Aorta (tissue), 5 donors: ENCODE measurements at regions of chr10 and their contacts with region 1.

Region 1: GRCh38 chr10:5948999-5949759 is 28.2 kb downstream of the IL15RA start:
- DNase-seq: peak; percentile 73 to 81
- ATAC-seq: no peak
- H3K4me3 ChIP-seq: no peak overlapping the region
- H3K27ac ChIP-seq: no peak overlapping the region
- H3K4me1 ChIP-seq: no peaks in the 10 kb centered on the region
- H3K27me3 ChIP-seq: no peaks in the 10 kb centered on the region

Region 2: GRCh38 chr10:5977471-5978229 is 28.5 kb after region 1 on chr10 and contains the start of gene IL15RA:
- intact Hi-C with region 1: loop called in 1 of 2 experiments (anchors 2 kb)
- DNase-seq: peak; percentile 90 to 94
- ATAC-seq: peak; percentile 83
- H3K4me3 ChIP-seq: peak within 1 kb of the TSS; percentile 81 to 84
- H3K27ac ChIP-seq: peak within 1 kb of the TSS; percentile 34 to 40
- H3K4me1 ChIP-seq: no peaks in the 10 kb centered on the region
- H3K27me3 ChIP-seq: no peaks in the 10 kb centered on the region
- total RNA-seq, gene IL15RA: 19.0 to 21.2 TPM

Region 3: GRCh38 chr10:6014241-6014761 is 65.1 kb after region 1 on chr10:
- intact Hi-C with region 1: loop called in 1 of 2 experiments (anchors 10 kb)
- DNase-seq: peak in 1 of 2 donors; percentile 58
- ATAC-seq: peak; percentile 67
- H3K4me3 ChIP-seq: no peak overlapping the region
- H3K27ac ChIP-seq: no peak overlapping the region
- H3K4me1 ChIP-seq: no peaks in the 10 kb centered on the region
- H3K27me3 ChIP-seq: no peaks in the 10 kb centered on the region

Region 4: DNA sequence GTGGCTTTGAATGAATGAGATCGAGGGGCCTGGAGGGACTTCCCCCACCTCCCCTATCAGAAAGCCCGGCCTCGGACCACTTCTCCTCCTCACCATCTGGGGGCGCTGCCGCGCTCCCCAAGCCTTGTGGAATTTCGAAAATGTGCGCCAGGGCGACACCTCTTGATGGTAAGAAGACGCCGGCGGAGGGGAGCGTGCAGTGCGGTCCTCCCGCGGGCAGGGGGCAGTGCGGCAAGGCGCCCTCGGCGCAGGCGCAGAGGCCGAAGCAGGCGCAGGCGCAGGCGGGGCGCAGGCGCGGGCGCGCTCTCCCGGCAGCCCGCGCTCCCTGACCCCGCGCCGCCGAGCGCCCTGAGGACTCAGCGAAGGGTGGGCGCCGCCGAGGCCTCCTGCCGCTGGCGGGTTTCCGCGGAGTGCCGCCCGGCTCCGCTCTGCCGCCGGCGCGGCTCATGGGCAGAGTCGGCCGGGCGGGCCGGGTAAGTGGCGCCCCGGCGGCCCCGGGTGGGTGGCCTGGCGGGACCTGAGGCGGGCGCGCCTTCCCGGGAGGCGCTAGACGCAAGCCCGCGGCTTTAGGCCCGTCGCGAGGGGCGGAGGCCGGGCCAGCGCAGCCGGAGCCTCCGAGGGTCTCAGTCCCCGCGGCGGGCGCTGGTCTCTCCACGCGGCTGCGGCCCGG is 139.7 kb after region 1 on chr10 and contains the start of gene RBM17:
- intact Hi-C with region 1: loop called in 1 of 2 experiments (anchors 5 kb)
- DNase-seq: peak; percentile 98
- ATAC-seq: peak; percentile 99
- H3K4me3 ChIP-seq: peak within 1 kb of the TSS; percentile 90 to 95
- H3K27ac ChIP-seq: peak within 1 kb of the TSS in 1 of 2 donors; percentile 49
- H3K4me1 ChIP-seq: peaks cover 0 to 4% of the 10 kb centered on the region in 2 donors
- H3K27me3 ChIP-seq: no peaks in the 10 kb centered on the region
- total RNA-seq, gene RBM17: 82.0 to 94.1 TPM

Region 5: GRCh38 chr10:6694447-6695140 is 745.4 kb after region 1 on chr10:
- intact Hi-C with region 1: no loop called
- DNase-seq: no peak
- ATAC-seq: no peak
- H3K4me3 ChIP-seq: no peak overlapping the region
- H3K27ac ChIP-seq: no peak overlapping the region
- H3K4me1 ChIP-seq: no peaks in the 10 kb centered on the region
- H3K27me3 ChIP-seq: peaks cover 0 to 4% of the 10 kb centered on the region in 2 donors